ENCODE measurements at regions of chr10 and their contacts with region 1.

Region 1: DNA sequence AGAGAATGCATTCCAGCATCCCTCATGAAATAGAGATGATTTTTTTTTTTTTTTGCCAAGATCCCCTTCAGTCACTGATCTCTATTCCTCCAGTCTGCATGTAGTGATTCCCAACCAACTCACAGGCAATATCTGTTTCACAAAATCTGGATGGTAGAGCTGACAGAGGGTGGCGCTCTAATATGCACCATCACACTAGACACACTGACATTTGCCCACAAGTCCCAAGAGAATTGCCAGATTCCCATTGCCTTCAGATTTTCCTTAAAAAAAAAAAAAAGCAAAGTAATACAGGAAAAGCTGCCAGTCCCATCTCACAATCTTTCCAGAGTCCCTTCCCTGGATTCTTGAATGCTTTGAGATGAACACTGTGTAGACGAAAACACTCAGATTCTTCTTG is 301.0 kb downstream of the SORCS1 start:
- DNase-seq: no peak
- ATAC-seq: no peak
- H3K4me3 ChIP-seq: no peak overlapping the region
- H3K27ac ChIP-seq: no peak overlapping the region
- H3K4me1 ChIP-seq: no peaks in the 10 kb centered on the region
- H3K27me3 ChIP-seq: no peaks in the 10 kb centered on the region
- CTCF ChIP-seq: no peak

Region 2: DNA sequence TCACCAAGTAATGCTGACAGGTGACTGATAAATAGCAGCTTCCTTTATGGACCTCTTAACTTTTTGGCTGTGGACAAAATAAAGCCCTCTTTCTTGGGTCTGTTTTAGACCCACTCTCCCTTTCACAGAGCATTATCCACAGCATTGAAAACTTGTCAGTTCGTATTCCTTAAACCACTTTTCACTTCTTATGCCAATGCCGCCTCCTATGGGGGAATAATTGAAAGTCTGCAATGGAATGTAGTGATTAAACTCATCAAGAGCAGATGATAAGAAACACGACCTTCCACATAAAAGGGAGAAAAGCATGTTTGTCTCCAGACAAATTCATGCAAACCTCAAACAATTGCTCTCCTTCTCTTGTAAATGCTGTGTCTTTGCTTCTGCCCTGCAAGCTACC is 147.6 kb after region 1 on chr10:
- intact Hi-C with region 1: loop called in 1 of 10 experiments (anchors 5 kb)
- DNase-seq: no peak
- ATAC-seq: no peak
- H3K4me3 ChIP-seq: no peak overlapping the region
- H3K27ac ChIP-seq: no peak overlapping the region
- H3K4me1 ChIP-seq: no peaks in the 10 kb centered on the region
- H3K27me3 ChIP-seq: peaks cover 0 to 3% (median 0%) of the 10 kb centered on the region in 7 donors
- CTCF ChIP-seq: peak in 1 of 9 donors; percentile 21